ENCODE measurements at regions of chr17 and their contacts with region 1.

Region 1: DNA sequence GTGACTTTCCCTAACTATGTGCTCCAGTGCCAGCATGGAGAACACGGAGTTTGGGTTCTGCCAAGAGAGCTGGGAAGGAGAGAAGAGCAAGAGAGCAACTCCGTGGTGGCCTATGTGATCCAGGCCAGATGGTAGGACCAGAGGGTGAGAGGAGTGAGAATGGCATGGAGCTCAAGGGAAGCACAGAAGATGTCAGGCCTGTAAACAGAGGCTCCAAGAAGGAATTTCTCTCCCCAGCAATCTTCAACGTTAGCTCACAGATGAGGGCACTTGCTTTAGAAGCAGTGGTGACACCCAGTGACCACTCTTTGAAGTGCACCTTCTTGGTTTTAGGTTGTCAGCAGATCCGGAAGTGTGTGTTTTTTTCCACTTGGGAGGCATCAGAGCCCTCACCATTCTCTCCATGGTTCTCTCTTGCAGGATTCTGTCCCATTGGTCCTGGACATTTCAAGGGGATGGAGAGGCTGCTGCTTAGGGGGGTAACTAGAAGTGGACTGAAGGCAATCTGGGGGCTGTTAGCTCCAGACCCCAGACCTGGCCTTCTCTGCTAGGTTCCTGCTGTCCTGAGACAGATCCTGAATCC is 18.1 kb upstream of the TMEM98 start:
- DNase-seq: peak; percentile 66
- H3K4me3 ChIP-seq: no peak overlapping the region
- H3K27ac ChIP-seq: no peak overlapping the region
- H3K27me3 ChIP-seq: peaks cover 1% of the 10 kb centered on the region
- CTCF ChIP-seq: peak; percentile 84

Region 2: DNA sequence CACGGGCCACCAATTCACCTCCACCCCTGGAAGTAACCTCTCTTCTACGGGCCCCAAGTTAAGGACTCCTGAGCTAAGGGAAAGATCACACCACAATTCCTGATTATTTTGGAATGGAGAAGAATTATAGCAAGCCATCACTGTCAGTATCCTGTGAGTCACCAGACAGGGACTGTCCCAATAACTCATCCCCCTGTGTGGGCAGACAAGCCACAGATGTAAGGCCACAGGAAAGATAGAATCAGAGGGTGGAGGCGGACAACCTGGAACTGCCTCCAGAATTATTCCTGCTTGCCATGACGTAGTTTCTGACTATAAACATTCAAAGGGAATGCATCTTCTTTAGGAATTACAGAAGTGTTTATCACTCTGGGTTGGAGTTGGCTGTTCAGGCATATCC is 27.1 kb before region 1 on chr17:
- CTCF ChIA-PET with region 1: interaction called, 46 read pairs
- POLR2A ChIA-PET with region 1: no interaction called
- DNase-seq: no peak
- H3K4me3 ChIP-seq: no peak overlapping the region
- H3K27ac ChIP-seq: no peak overlapping the region
- H3K27me3 ChIP-seq: no peaks in the 10 kb centered on the region
- CTCF ChIP-seq: no peak

Region 3: GRCh38 chr17:32921017-32921416 is 11.1 kb after region 1 on chr17:
- CTCF ChIA-PET with region 1: interaction called, 14 read pairs
- POLR2A ChIA-PET with region 1: no interaction called
- DNase-seq: no peak
- H3K4me3 ChIP-seq: no peak overlapping the region
- H3K27ac ChIP-seq: no peak overlapping the region
- H3K27me3 ChIP-seq: no peaks in the 10 kb centered on the region
- CTCF ChIP-seq: no peak

Region 4: GRCh38 chr17:32936894-32937500 is 27.1 kb after region 1 on chr17:
- CTCF ChIA-PET with region 1: interaction called, 17 read pairs
- POLR2A ChIA-PET with region 1: no interaction called
- DNase-seq: peak; percentile 42
- H3K4me3 ChIP-seq: no peak overlapping the region
- H3K27ac ChIP-seq: peak overlapping the region; percentile 39
- H3K27me3 ChIP-seq: no peaks in the 10 kb centered on the region
- CTCF ChIP-seq: peak; percentile 76

Measured in AG04450 (cell line).